Endothelial cell of umbilical vein (primary cell): ENCODE measurements at regions of chr1 and their contacts with region 1.

Region 1: GRCh38 chr1:178501705-178502329 is 5.1 kb upstream of the CLEC20A start:
- DNase-seq: peak; percentile 68
- H3K4me3 ChIP-seq: no peak overlapping the region
- H3K27ac ChIP-seq: no peak overlapping the region
- H3K4me1 ChIP-seq: no peaks in the 10 kb centered on the region
- H3K27me3 ChIP-seq: no peaks in the 10 kb centered on the region
- CTCF ChIP-seq: peak; percentile 92 to 96
- POLR2A ChIP-seq: no peak

Region 2: GRCh38 chr1:178243119-178243518 is 258.7 kb before region 1 on chr1:
- CTCF ChIA-PET with region 1: no interaction called
- POLR2A ChIA-PET with region 1: no interaction called
- dilution Hi-C with region 1: no loop called
- intact Hi-C with region 1: no loop called
- DNase-seq: no peak
- H3K4me3 ChIP-seq: no peak overlapping the region
- H3K27ac ChIP-seq: no peak overlapping the region
- H3K4me1 ChIP-seq: peaks cover 32% of the 10 kb centered on the region
- H3K27me3 ChIP-seq: no peaks in the 10 kb centered on the region
- CTCF ChIP-seq: no peak
- POLR2A ChIP-seq: no peak

Region 3: DNA sequence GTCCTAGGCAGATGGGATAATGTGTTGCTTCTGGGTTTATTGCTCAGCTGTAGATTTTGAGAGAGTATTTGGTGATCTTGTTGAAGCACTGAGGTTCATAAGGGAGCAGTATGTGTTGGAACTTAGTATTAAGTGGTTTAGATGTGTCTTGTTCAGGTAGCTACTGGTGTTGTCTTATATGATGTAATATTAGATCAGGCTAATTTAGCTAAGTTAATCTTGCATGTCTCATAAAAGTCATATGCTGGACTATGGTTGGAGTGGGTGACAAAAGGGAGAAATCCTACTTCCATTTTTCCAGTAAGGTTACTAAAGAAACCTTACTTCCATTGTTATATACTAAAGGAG is 201.5 kb before region 1 on chr1:
- CTCF ChIA-PET with region 1: interaction called, 97 read pairs
- POLR2A ChIA-PET with region 1: no interaction called
- dilution Hi-C with region 1: no loop called
- intact Hi-C with region 1: loop called (anchors 2 kb)
- DNase-seq: no peak
- H3K4me3 ChIP-seq: no peak overlapping the region
- H3K27ac ChIP-seq: no peak overlapping the region
- H3K4me1 ChIP-seq: peaks cover 10% of the 10 kb centered on the region
- H3K27me3 ChIP-seq: no peaks in the 10 kb centered on the region
- CTCF ChIP-seq: no peak
- POLR2A ChIP-seq: no peak

Region 4: DNA sequence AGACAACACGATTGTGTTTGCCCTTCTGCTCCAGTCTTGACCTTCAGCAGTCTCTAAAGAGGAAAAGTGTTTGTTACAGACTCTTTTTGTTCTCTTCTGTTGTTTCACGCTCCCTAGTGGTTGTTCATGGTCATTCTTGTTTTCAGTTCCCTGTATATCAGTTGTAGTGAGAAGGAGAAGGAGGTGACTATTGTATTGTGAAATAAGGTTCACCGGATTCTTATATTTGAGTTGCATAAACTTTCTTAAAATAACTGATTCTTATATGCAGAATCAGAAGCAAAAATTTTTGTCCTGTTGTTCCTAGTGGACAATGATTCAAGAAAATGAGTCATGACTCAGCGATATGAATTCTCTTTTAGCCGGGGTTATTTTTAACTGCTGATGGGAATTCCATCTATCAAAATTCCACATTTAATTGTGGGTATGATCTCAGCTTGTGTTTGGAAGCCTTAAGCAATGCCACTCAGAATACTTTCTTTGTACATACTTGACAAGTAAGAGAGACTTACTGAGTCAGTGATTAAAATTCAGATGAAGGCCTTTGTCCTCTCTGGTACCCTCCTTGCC is 157.2 kb before region 1 on chr1:
- CTCF ChIA-PET with region 1: interaction called, 8 read pairs
- POLR2A ChIA-PET with region 1: no interaction called
- dilution Hi-C with region 1: no loop called
- intact Hi-C with region 1: loop called (anchors 1 kb)
- DNase-seq: peak; percentile 87
- H3K4me3 ChIP-seq: no peak overlapping the region
- H3K27ac ChIP-seq: peak overlapping the region; percentile 72
- H3K4me1 ChIP-seq: peaks cover 27% of the 10 kb centered on the region
- H3K27me3 ChIP-seq: no peaks in the 10 kb centered on the region
- CTCF ChIP-seq: peak; percentile 29 to 50
- POLR2A ChIP-seq: no peak

Region 5: DNA sequence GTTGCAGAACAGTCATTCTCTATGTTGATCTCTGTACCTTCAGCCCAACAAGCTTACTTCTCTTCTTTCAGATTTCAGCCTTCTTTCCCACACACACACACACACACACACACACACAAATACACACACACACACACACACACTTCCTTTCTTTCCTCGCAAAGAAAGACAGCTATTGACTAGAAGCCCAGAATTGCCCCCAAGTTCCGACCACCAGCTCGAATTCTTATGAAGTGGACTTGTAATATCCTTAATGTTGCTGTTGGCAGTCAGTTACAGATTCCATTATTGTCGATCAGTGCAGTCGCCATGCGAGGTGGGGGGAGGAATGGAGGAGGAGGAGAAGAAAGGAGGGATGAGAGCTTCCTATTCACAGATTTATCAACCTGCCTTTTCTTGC is 130.6 kb before region 1 on chr1:
- CTCF ChIA-PET with region 1: interaction called, 3 read pairs
- POLR2A ChIA-PET with region 1: no interaction called
- dilution Hi-C with region 1: no loop called
- intact Hi-C with region 1: loop called (anchors 5 kb)
- DNase-seq: peak; percentile 72
- H3K4me3 ChIP-seq: peak overlapping the region; percentile 23 to 60 (median 26)
- H3K27ac ChIP-seq: no peak overlapping the region
- H3K4me1 ChIP-seq: peaks cover 8% of the 10 kb centered on the region
- H3K27me3 ChIP-seq: no peaks in the 10 kb centered on the region
- CTCF ChIP-seq: no peak
- POLR2A ChIP-seq: no peak

Region 6: GRCh38 chr1:178407655-178408054 is 94.2 kb before region 1 on chr1:
- CTCF ChIA-PET with region 1: no interaction called
- POLR2A ChIA-PET with region 1: no interaction called
- dilution Hi-C with region 1: no loop called
- intact Hi-C with region 1: loop called (anchors 2 kb)
- DNase-seq: no peak
- H3K4me3 ChIP-seq: no peak overlapping the region
- H3K27ac ChIP-seq: no peak overlapping the region
- H3K4me1 ChIP-seq: peaks cover 12% of the 10 kb centered on the region
- H3K27me3 ChIP-seq: no peaks in the 10 kb centered on the region
- CTCF ChIP-seq: no peak
- POLR2A ChIP-seq: no peak

Region 7: GRCh38 chr1:178520783-178521182 is 19.0 kb after region 1 on chr1:
- CTCF ChIA-PET with region 1: interaction called, 14 read pairs
- POLR2A ChIA-PET with region 1: no interaction called
- dilution Hi-C with region 1: no loop called
- intact Hi-C with region 1: no loop called
- DNase-seq: no peak
- H3K4me3 ChIP-seq: no peak overlapping the region
- H3K27ac ChIP-seq: no peak overlapping the region
- H3K4me1 ChIP-seq: no peaks in the 10 kb centered on the region
- H3K27me3 ChIP-seq: peaks cover 0 to 3% of the 10 kb centered on the region in 2 experiments
- CTCF ChIP-seq: no peak
- POLR2A ChIP-seq: no peak

Region 8: DNA sequence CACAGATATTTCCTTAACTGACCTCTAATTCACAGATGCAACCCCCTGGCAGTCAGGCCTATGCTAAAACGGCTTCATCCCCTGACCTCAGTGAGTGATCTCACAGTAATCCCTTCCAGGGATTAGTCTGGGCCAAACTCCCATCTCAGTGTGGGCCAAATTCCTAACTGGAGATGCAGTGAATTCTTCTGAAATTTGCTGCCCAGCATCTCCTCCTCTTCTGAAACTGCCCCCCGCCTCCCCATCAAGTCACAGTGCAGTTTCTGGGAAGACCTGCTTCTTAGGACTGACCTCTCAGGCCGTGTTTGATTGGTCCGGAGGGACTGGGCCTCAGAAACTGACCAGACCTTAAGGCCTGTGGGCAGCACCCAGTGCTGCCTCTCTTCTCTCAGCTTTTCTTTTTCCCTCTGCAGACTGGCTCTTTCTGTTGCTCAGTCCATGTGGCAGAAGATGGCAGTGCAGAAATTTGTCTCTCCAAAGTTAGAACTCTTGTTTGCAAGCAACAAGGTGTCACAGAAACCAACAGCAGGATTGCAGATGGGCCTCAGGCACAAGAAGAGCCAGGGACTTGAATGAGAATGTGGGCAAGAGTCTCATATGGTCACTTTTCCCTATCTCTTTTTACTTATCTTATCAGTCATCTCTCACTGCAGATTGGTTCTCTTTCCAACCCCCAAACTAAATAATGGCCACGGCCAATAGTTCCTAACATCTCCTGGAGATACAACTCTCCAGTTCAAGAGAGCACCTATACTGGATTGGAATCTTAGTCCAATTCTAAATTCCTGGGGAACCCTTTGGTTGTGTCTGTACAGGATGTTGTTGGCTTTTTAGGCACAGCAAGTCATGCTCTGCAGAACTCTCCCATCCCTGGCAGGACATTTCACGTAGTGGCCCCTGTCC is 127.7 kb after region 1 on chr1:
- CTCF ChIA-PET with region 1: no interaction called
- POLR2A ChIA-PET with region 1: no interaction called
- dilution Hi-C with region 1: no loop called
- intact Hi-C with region 1: no loop called
- DNase-seq: no peak
- H3K4me3 ChIP-seq: no peak overlapping the region
- H3K27ac ChIP-seq: no peak overlapping the region
- H3K4me1 ChIP-seq: no peaks in the 10 kb centered on the region
- H3K27me3 ChIP-seq: no peaks in the 10 kb centered on the region
- CTCF ChIP-seq: no peak
- POLR2A ChIP-seq: no peak